ENCODE measurements at regions of chr1 and their contacts with region 1.

Region 1: GRCh38 chr1:16946646-16947045 is 24.9 kb downstream of the CROCC start:
- DNase-seq: no peak
- ATAC-seq: no peak
- H3K4me3 ChIP-seq: no peak overlapping the region
- H3K4me3 Mint-ChIP-seq: no peak overlapping the region
- H3K27ac ChIP-seq: no peak overlapping the region
- H3K27ac Mint-ChIP-seq: no peak overlapping the region
- H3K4me1 ChIP-seq: peaks cover 0 to 2% of the 10 kb centered on the region in 2 experiments
- H3K4me1 Mint-ChIP-seq: no peaks in the 10 kb centered on the region
- H3K27me3 ChIP-seq: no peaks in the 10 kb centered on the region
- H3K27me3 Mint-ChIP-seq: no peaks in the 10 kb centered on the region

Region 2: GRCh38 chr1:17053685-17054410 is 107.2 kb after region 1 on chr1 and contains the start of gene SDHB:
- CTCF ChIA-PET with region 1: interaction called in 1 of 2 experiments, 12 read pairs
- POLR2A ChIA-PET with region 1: no interaction called
- DNase-seq: peak; percentile 95 to 100 (median 98)
- ATAC-seq: peak; percentile 99
- H3K4me3 ChIP-seq: peak within 1 kb of the TSS; percentile 65 to 92
- H3K4me3 Mint-ChIP-seq: peak within 1 kb of the TSS; percentile 91 to 99 (median 99)
- H3K27ac ChIP-seq: peak within 1 kb of the TSS; percentile 52
- H3K27ac Mint-ChIP-seq: peak within 1 kb of the TSS; percentile 97 to 98
- H3K4me1 ChIP-seq: peaks cover 15% of the 10 kb centered on the region in 2 experiments
- H3K4me1 Mint-ChIP-seq: peaks cover 30 to 36% (median 31%) of the 10 kb centered on the region in 3 donors
- H3K27me3 ChIP-seq: peaks cover 0 to 2% of the 10 kb centered on the region in 2 experiments
- H3K27me3 Mint-ChIP-seq: peaks cover 3 to 7% of the 10 kb centered on the region in 2 donors
- total RNA-seq, gene SDHB: 46.2 to 61.7 (median 57.6) TPM